Activated T-helper 1 cell treated with anti-CD3 and anti-CD28 coated beads, Interleukin-12 subunit alpha, Interleukin-12 subunit beta, Interleukin-2, Interleukin-4 antibody, amounts not matched to agents 30 ng/mL and 10 ng/mL and 1 ng/mL, durations not matched to agents 14 hours and 24 hours and 36 hours (primary cell): ENCODE measurements at regions of chr6 and their contacts with region 1.

Region 1: DNA sequence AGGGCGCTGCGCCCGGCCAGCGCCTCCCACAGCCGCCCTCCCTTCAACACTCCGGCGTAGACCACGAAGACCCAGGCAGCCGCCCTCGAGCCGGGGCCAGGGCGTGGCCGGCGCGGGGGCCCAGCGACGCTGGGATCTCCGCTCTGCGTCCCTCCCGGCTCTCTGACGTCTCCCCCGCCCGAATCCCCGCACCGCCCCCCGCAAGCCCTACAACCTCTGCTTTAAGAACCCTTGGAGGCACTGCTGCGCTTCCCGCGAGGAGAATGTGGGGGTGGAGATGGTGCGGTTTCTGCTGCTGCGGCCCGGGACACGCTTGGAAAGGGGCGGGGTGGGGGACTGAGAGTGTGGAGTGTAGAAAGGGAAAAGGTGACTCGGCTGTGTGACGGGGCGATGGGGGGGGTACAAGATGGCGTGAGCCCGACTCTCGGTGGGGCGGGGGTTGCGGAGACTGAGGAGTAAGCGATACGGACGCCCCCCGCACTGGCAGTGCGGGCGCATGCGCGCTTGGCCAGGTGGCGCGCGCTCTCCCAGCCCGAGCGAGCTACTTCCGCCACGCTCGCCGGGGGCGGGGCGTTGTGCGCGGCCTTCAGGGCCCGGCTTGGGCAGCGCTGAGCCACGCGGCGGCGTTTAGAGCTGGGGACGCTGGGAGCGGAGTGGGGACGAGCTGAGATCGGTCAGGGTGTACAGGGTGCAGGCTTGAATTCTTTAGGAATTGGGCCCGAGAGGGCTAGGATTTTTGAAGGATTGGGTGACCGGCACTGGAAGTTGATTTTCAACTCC is at the start of gene SUPT3H:
- DNase-seq: peak; percentile 88
- H3K4me3 Mint-ChIP-seq: peak within 1 kb of the TSS; percentile 96
- H3K27ac Mint-ChIP-seq: peak within 1 kb of the TSS; percentile 100
- H3K4me1 Mint-ChIP-seq: peaks cover 27% of the 10 kb centered on the region
- H3K27me3 Mint-ChIP-seq: no peaks in the 10 kb centered on the region
- total RNA-seq, gene SUPT3H: 11.0 and 11.7 TPM in 2 replicates

Region 2: GRCh38 chr6:44655412-44656342 is 722.1 kb before region 1 on chr6:
- intact Hi-C with region 1: loop called (anchors 1 kb)
- DNase-seq: peak; percentile 47
- H3K4me3 Mint-ChIP-seq: no peak overlapping the region
- H3K27ac Mint-ChIP-seq: peak overlapping the region; percentile 8
- H3K4me1 Mint-ChIP-seq: peaks cover 8% of the 10 kb centered on the region
- H3K27me3 Mint-ChIP-seq: peaks cover 4% of the 10 kb centered on the region

Region 3: DNA sequence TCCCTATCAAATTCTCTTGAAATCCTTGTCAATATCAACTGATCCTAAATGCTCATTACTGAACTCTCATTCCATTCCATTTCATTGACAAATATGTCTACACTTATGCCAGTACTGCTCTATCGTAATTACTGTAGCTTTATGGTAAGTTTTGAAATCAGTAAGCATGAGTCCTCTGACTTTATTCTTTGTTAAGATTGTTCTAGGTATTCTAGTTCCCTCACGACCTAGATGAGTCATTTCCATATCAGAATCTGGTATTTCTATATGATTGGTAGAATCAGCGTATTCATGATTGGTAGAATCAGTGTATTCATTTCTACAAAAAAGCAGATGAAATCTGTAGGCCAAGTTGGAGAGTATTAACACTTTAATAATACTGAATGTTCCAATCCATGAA is 368.2 kb before region 1 on chr6:
- intact Hi-C with region 1: loop called (anchors 2 kb)
- DNase-seq: no peak
- H3K4me3 Mint-ChIP-seq: no peak overlapping the region
- H3K27ac Mint-ChIP-seq: peak overlapping the region; percentile 67
- H3K4me1 Mint-ChIP-seq: peaks cover 30% of the 10 kb centered on the region
- H3K27me3 Mint-ChIP-seq: no peaks in the 10 kb centered on the region

Region 4: DNA sequence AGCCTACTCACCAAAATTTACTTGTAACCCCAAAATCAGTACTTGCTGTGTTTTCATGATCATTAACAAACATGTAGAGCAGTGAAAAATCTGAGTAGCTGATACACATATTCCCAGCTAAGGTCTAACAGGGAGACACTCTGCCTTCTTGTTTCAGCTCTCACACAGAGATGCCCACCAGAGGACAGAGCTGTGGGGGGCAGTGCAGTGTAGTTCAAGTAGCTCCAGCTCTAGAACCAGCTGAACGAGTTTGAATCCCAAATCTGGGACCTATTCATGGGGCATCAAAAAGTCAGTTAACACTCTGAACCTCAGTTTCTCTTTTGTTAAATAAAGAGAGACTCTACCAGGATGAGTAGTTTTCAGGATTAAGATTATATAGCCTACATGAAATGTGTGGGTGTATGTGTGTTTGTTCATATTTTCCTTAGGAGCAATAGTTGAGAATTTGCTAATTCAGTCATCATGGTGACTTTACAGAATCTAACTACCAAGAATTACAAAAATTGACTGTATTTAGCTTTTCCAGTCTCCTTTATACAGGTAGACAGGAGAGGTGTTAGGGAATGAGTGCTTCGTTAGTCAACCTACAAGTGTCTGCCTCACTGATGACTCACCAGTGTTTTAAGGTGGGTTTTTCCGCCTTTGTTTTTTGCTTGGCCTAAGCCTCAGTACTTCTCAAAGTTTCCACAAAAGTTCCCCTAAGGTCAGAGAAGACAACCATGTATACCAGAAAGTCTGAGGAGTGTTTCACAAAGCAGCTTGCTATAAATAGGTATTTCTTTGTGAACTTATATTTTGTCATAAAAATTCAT is 213.6 kb before region 1 on chr6:
- intact Hi-C with region 1: loop called (anchors 1 kb)
- DNase-seq: peak; percentile 31
- H3K4me3 Mint-ChIP-seq: peak overlapping the region; percentile 35
- H3K27ac Mint-ChIP-seq: peak overlapping the region; percentile 89
- H3K4me1 Mint-ChIP-seq: peaks cover 62% of the 10 kb centered on the region
- H3K27me3 Mint-ChIP-seq: no peaks in the 10 kb centered on the region

Region 5: DNA sequence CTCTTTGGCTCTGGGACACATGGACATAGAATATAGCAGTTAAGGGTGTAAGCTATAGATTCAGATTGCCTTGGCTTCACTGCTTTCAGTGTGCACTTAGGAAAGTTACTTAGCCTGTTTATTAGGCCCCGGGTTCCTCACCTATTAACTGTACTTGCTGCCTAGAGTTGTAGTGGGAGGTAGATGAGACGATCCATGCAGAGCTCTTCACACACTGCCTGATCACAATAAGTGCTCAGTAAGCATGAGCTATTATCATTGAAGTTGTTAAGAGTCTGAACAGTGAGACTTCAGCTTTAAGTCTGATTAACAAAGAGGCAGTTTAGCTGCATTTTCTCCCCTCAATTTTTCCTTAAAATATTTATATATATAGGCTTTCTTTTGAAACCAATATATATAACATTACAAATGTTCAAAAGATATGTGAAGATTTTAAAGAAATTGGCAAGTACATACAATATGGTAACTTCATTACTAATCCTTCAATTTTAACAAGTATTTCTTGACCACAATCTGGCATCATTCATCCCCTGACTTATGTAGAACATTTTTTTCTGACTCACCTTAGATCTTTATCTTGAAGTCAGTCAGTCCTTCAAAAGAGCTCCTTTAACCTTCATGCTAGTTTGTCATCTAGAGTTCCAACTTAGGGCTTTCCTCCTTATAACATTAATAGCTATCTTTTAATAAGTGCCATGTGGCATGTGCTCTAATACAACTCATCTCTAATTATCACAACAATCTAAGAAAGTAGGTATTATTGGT is 20.5 kb after region 1 on chr6:
- intact Hi-C with region 1: loop called (anchors 1 kb)
- DNase-seq: no peak
- H3K4me3 Mint-ChIP-seq: no peak overlapping the region
- H3K27ac Mint-ChIP-seq: no peak overlapping the region
- H3K4me1 Mint-ChIP-seq: peaks cover 5% of the 10 kb centered on the region
- H3K27me3 Mint-ChIP-seq: peaks cover 10% of the 10 kb centered on the region

Region 6: DNA sequence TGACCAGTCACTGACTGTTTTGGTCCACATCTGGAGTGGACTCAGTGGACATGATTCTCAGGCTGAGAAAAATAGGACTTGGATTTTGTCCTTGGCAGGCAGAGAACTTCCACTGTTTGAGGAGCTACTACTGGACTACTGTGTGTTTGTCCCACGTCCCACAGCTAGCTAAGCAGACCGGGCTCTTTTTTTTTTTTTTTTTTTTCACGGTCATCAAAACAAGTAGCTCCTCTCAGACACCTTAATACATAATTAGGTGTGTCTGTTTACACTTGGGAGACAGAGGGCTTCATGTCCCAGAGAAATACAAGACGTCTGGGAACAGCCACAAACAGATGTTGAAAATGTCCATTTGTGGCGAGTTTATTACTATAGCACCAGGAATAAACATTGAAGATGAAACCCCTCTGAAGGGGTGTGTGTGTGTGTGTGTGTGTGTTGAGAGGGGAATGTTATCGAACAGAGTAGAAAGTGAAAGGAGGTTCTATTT is 155.0 kb after region 1 on chr6:
- intact Hi-C with region 1: no loop called
- DNase-seq: no peak
- H3K4me3 Mint-ChIP-seq: no peak overlapping the region
- H3K27ac Mint-ChIP-seq: no peak overlapping the region
- H3K4me1 Mint-ChIP-seq: peaks cover 7% of the 10 kb centered on the region
- H3K27me3 Mint-ChIP-seq: no peaks in the 10 kb centered on the region

Region 7: DNA sequence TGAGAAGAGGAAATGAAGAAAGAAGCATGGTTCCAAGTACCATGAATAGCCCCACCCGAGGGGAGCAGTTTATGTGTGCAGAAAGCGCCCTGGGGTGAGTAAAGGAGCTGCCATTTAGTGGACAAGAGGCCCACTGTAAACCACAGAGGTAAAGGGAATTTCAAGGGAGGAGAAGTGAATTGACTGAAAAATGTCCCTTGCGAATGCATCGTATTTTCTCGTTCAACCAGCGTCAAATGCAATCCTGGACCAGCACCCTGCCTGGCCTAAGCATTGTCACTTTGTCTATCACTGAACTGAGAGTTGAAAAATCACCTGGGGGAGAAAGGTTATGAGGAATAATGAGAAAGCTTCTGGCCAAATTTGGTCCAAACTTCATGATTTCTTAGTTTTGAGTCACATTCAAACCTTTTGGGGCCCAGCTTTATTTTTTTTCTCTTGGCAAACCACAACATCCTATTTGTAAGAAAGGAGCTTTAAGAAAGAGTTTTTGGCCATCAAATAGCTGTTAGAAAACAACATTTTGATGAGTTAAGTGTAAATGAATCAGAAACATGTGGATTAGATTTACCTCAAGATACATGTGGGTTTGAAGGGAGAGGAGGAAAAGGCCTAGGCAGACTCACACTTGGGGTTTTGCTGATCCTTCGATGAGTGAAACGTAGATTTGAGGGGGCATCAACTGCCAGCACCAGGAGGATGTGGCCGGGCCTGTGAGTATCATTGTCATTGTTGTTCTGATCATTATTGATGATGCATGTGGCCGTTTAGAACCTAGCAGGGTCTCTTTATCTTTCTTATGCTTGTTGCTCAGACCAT is 423.9 kb after region 1 on chr6:
- intact Hi-C with region 1: loop called (anchors 2 kb)
- DNase-seq: peak; percentile 33
- H3K4me3 Mint-ChIP-seq: peak overlapping the region; percentile 2
- H3K27ac Mint-ChIP-seq: no peak overlapping the region
- H3K4me1 Mint-ChIP-seq: no peaks in the 10 kb centered on the region
- H3K27me3 Mint-ChIP-seq: no peaks in the 10 kb centered on the region